ENCODE measurements at regions of chr11 and their contacts with region 1.

Region 1: GRCh38 chr11:2975594-2975993 is 16.5 kb downstream of the NAP1L4 start:
- DNase-seq: peak in 8 of 9 donors; percentile 26 to 68 (median 48)
- ATAC-seq: peak; percentile 95
- H3K4me3 ChIP-seq: no peak overlapping the region
- H3K4me3 Mint-ChIP-seq: no peak overlapping the region
- H3K27ac ChIP-seq: no peak overlapping the region
- H3K27ac Mint-ChIP-seq: peak overlapping the region in 3 of 9 donors; percentile 24 to 66 (median 41)
- H3K4me1 ChIP-seq: peaks cover 0 to 7% of the 10 kb centered on the region in 2 donors
- H3K4me1 Mint-ChIP-seq: peaks cover 21 to 51% (median 37%) of the 10 kb centered on the region in 7 donors
- H3K27me3 ChIP-seq: no peaks in the 10 kb centered on the region
- H3K27me3 Mint-ChIP-seq: no peaks in the 10 kb centered on the region

Region 2: GRCh38 chr11:2761131-2762030 is 214.2 kb before region 1 on chr11:
- CTCF ChIA-PET with region 1: no interaction called
- POLR2A ChIA-PET with region 1: no interaction called
- intact Hi-C with region 1: no loop called
- DNase-seq: peak in 1 of 9 donors; percentile 2
- ATAC-seq: no peak
- H3K4me3 ChIP-seq: no peak overlapping the region
- H3K4me3 Mint-ChIP-seq: no peak overlapping the region
- H3K27ac ChIP-seq: no peak overlapping the region
- H3K27ac Mint-ChIP-seq: peak overlapping the region in 1 of 9 donors; percentile 34
- H3K4me1 ChIP-seq: no peaks in the 10 kb centered on the region
- H3K4me1 Mint-ChIP-seq: peaks cover 0 to 11% (median 0%) of the 10 kb centered on the region in 7 donors
- H3K27me3 ChIP-seq: no peaks in the 10 kb centered on the region
- H3K27me3 Mint-ChIP-seq: peaks cover 0 to 7% (median 0%) of the 10 kb centered on the region in 5 donors

Region 3: DNA sequence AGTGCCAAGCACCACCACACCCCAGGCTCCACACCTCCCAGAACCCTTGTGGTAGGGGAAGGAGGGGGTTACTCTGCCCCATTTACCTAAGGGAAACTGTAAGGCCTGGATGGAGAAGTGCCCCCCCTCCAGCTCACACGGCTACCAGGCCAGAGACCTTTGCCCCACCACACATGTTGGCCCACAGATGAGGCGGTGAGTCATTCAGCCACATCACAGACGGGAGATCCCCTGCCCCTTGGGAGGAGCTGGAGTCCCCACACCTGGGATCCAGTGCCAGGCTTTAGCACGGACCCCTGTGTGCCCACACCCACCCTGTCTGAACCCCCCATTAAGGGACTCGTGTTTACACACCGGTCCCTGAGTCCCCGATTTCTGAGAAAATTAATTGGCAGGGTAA is 115.0 kb before region 1 on chr11:
- CTCF ChIA-PET with region 1: no interaction called
- POLR2A ChIA-PET with region 1: no interaction called
- intact Hi-C with region 1: no loop called
- DNase-seq: no peak
- ATAC-seq: peak; percentile 68
- H3K4me3 ChIP-seq: no peak overlapping the region
- H3K4me3 Mint-ChIP-seq: no peak overlapping the region
- H3K27ac ChIP-seq: no peak overlapping the region
- H3K27ac Mint-ChIP-seq: no peak overlapping the region
- H3K4me1 ChIP-seq: no peaks in the 10 kb centered on the region
- H3K4me1 Mint-ChIP-seq: peaks cover 0 to 6% (median 0%) of the 10 kb centered on the region in 7 donors
- H3K27me3 ChIP-seq: no peaks in the 10 kb centered on the region
- H3K27me3 Mint-ChIP-seq: peaks cover 23 to 43% (median 38%) of the 10 kb centered on the region in 5 donors

Region 4: DNA sequence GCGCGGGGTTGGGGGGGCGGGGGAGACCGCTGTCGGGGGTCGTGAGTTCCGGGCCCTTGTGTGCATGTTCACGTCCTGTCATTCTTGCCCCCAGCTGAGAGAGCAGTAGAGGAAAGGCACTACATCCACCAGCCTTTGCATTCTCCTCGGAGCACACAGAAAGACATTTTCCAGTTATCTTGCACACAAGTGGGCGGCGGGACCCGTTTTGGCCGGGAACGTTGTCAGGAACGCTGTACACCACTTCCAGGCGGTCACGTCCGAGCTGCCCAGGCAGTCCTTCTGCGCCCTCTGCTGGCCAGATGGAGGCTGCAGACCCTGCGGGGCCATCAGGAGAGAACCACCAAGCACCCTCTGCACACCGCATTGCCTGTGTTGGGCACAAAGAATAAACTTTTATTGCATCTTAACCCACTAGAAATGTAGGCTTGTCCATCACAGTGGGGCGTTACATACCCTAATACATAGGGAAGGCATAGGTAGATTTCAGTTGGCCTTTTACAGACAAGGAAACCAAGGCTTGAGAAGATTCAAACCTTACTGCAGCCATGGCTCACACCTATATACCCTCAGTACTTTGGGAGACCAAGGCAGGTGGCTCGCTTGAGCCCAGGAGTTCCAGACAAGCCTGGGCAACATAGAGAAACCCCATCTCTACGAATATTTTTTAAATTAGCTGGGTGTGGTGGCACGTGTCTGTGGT is 87.2 kb before region 1 on chr11:
- CTCF ChIA-PET with region 1: no interaction called
- POLR2A ChIA-PET with region 1: no interaction called
- intact Hi-C with region 1: no loop called
- DNase-seq: peak; percentile 67 to 89 (median 80)
- ATAC-seq: peak; percentile 39
- H3K4me3 ChIP-seq: no peak overlapping the region
- H3K4me3 Mint-ChIP-seq: peak overlapping the region in 5 of 10 donors; percentile 16 to 58 (median 29)
- H3K27ac ChIP-seq: no peak overlapping the region
- H3K27ac Mint-ChIP-seq: peak overlapping the region in 7 of 9 donors; percentile 41 to 78 (median 64)
- H3K4me1 ChIP-seq: peaks cover 14 to 28% of the 10 kb centered on the region in 2 donors
- H3K4me1 Mint-ChIP-seq: peaks cover 6 to 47% (median 33%) of the 10 kb centered on the region in 7 donors
- H3K27me3 ChIP-seq: no peaks in the 10 kb centered on the region
- H3K27me3 Mint-ChIP-seq: peaks cover 0 to 23% (median 0%) of the 10 kb centered on the region in 5 donors

Region 5: DNA sequence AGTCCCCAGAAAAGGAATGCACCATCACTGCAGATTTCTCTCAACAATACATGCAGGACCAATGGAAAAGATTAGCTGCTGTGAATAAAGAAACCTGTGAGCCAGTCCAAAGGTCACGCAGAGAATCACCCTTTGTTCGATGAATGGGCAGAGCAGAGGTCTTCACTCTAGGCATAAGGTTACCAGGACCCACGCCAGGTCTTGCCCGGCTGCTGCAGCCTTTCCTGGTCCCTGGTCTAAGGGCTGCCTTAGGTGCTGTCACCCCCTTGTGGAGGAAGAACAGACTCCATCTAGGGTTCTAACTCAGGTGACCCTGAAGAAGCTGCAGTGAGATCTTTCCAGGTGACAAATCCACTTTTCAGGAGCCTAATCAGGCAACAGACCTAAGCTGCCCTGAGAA is 45.5 kb after region 1 on chr11:
- CTCF ChIA-PET with region 1: interaction called, 43 read pairs
- POLR2A ChIA-PET with region 1: interaction called, 5 read pairs
- intact Hi-C with region 1: loop called (anchors 1 kb)
- DNase-seq: peak in 7 of 9 donors; percentile 37 to 60 (median 48)
- ATAC-seq: peak; percentile 81
- H3K4me3 ChIP-seq: no peak overlapping the region
- H3K4me3 Mint-ChIP-seq: no peak overlapping the region
- H3K27ac ChIP-seq: no peak overlapping the region
- H3K27ac Mint-ChIP-seq: peak overlapping the region in 2 of 9 donors; percentile 38 to 78
- H3K4me1 ChIP-seq: peaks cover 0 to 27% of the 10 kb centered on the region in 2 donors
- H3K4me1 Mint-ChIP-seq: peaks cover 21 to 54% (median 46%) of the 10 kb centered on the region in 7 donors
- H3K27me3 ChIP-seq: no peaks in the 10 kb centered on the region
- H3K27me3 Mint-ChIP-seq: no peaks in the 10 kb centered on the region